ENCODE measurements at regions of chr19 and their contacts with region 1.

Region 1: GRCh38 chr19:41691268-41691970 is 3.3 kb upstream of the CEACAM7 start:
- DNase-seq: peak; percentile 77
- H3K4me3 Mint-ChIP-seq: no peak overlapping the region
- H3K27ac Mint-ChIP-seq: no peak overlapping the region
- H3K4me1 Mint-ChIP-seq: peaks cover 30% of the 10 kb centered on the region
- H3K27me3 Mint-ChIP-seq: peaks cover 36% of the 10 kb centered on the region
- CTCF ChIP-seq: peak; percentile 88

Region 2: DNA sequence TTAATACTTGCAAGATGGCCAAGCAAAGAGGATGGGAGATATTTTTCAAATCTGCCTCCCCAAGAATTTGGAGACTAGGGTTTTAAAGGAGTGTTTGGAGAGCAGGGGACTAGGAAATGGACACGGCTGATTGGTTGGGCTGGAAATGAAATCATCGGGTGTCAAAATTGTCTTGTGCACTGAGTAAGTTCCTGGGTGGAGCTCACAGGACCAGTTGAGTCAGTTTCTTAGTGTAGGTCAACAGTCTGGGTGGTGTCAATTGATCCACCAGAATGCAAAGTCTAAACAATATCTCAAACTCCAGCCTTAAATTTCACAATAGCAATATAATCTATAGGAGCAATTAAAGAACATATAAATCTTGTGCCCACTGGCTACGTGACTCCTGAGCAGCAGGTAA is 41.6 kb before region 1 on chr19:
- CTCF ChIA-PET with region 1: interaction called, 14 read pairs
- intact Hi-C with region 1: no loop called
- DNase-seq: peak; percentile 67
- H3K4me3 Mint-ChIP-seq: peak overlapping the region; percentile 3
- H3K27ac Mint-ChIP-seq: peak overlapping the region; percentile 8
- H3K4me1 Mint-ChIP-seq: peaks cover 28% of the 10 kb centered on the region
- H3K27me3 Mint-ChIP-seq: no peaks in the 10 kb centered on the region
- CTCF ChIP-seq: no peak